Activated CD4-positive, alpha-beta T cell treated with anti-CD3 and anti-CD28 coated beads, Interleukin-2, amount 10 ng/mL, durations not matched to agents 24 days and 14 days (primary cell): ENCODE measurements at regions of chr12 and their contacts with region 1.

Region 1: DNA sequence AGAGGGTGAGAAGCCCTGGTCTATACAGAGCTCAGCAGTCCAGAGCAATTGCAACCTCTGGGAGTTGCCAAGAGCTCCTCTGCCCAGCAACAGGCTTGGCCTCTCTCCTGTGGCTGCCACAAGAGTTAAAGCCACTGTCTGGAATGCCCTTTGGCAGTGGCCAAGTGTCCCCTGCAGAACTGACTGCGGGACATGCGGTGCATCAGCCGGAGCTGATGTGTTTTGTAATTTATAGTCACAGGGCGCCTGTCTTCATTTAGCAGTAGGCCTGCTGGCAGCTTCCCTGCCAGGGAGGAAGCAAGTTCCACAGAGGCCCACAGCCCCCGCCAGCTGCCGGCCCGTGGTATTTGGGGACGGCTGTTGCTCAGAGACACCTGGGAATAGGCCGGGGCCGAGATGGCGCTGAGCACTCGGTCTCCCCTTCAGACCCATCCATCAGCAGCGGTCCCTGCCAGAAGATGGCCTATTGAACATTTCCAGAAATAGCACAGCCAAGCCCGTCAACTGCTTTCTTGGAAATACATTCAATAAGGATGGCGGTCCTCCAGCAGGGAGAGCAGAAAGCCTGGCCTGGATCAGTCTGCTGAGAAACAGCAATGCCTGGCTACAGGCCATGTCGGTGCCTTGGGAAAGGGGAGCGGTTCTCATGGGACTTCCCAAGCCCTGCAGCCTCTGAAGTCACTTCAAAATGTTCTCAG is 217.4 kb downstream of the CRADD start:
- DNase-seq: no peak
- H3K4me3 Mint-ChIP-seq: no peak overlapping the region
- H3K27ac Mint-ChIP-seq: no peak overlapping the region
- H3K4me1 Mint-ChIP-seq: peaks cover 37% of the 10 kb centered on the region
- H3K27me3 Mint-ChIP-seq: no peaks in the 10 kb centered on the region

Region 2: GRCh38 chr12:93707836-93708235 is 186.7 kb before region 1 on chr12:
- intact Hi-C with region 1: no loop called
- DNase-seq: no peak
- H3K4me3 Mint-ChIP-seq: no peak overlapping the region
- H3K27ac Mint-ChIP-seq: no peak overlapping the region
- H3K4me1 Mint-ChIP-seq: peaks cover 2% of the 10 kb centered on the region
- H3K27me3 Mint-ChIP-seq: no peaks in the 10 kb centered on the region

Region 3: GRCh38 chr12:93857279-93857938 is 37.1 kb before region 1 on chr12:
- intact Hi-C with region 1: loop called (anchors 5 kb)
- DNase-seq: peak; percentile 46
- H3K4me3 Mint-ChIP-seq: no peak overlapping the region
- H3K27ac Mint-ChIP-seq: no peak overlapping the region
- H3K4me1 Mint-ChIP-seq: peaks cover 25% of the 10 kb centered on the region
- H3K27me3 Mint-ChIP-seq: no peaks in the 10 kb centered on the region